Cardiac septum (tissue), 1 donor: ENCODE measurements at regions of chr6 and their contacts with region 1.

Region 1: DNA sequence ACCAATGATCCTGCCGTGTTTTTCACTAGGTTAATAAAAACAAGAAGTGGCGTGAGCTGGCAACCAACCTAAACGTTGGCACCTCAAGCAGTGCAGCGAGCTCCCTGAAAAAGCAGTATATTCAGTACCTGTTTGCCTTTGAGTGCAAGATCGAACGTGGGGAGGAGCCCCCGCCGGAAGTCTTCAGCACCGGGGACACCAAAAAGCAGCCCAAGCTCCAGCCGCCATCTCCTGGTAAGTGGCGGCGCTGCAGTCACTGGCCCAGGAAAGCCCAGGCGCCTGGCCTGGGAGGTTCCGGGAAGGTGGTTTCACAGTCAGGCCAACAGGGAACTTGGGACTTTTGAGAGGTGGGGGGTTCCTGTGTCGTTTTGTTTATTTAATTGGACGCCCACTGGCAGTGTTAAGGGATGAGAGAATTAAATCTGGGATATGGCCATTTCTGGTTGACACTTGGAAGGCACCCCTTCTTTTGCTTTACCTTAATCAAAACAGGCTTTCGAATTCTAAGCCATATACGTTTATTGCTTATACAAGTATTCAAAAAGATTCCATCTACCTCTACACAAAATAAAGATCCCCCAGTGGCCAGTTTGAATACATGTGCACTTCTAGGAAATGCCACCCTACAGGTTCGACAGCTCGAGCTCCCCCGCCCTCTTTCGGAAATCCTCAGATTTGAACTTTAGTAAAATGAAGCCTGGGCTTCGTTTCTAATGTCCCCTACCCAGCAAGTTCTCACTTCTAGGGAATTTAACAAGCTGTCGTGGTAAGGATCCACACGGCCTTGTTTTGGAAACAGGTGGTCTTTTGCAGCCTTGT is 138.9 kb downstream of the TMEM242 start:
- DNase-seq: no peak

Region 2: GRCh38 chr6:157034436-157035230 is 149.8 kb before region 1 on chr6:
- intact Hi-C with region 1: loop called (anchors 2 kb)
- DNase-seq: no peak

Region 3: DNA sequence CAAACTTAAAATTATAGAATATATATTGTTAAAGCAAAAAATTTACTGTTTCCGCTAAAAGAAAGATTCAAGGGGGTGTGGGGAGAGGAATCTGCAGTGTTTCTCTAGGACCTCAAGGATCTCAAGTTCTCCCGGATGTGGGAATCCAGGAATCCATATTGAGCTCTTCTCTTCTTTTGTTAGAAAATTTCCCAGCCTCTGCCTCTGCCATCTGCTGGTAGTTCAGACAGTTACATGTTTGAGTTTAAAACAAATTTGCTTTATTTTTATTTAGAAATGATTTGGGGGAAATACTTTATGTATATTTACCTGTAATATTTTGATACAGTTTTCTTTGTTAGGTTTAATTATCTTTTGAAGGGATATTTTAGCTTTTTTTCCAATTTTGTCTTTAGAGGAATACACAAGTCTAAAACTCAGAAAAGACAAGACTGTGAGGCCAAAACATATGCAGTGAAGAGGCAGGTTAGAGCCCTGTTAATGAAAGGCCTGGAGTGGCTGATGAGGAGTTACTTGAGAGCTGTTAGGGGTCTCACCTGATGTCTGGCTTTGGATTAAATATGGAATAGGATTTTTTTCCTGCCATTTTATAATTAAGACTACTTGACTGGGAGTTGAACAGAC is 138.5 kb before region 1 on chr6:
- intact Hi-C with region 1: no loop called
- DNase-seq: no peak

Region 4: DNA sequence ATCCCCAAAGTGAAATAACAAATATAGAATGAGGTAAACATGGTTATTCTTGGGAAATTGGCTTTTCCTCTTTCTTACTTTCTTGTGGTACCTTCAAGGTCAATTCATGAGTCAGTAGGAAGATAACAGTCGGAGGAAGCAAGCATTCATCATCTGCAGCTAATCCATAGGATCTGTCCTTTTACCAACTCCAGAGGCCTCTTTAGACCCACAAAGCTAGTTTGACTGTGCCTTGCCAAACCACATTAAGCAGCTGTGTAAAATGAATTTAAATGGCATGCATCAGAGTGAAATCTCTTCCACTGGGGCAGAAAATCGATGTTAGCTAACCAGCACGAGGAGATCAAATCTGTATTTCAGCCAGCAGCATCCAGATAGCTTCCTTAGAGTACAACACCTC is 32.4 kb before region 1 on chr6:
- intact Hi-C with region 1: loop called (anchors 5 kb)
- DNase-seq: no peak